Tibial artery (tissue), 4 donors: ENCODE measurements at regions of chr13 and their contacts with region 1.

Region 1: GRCh38 chr13:30408319-30409101 is 13.8 kb upstream of the UBE2L5 start:
- DNase-seq: peak; percentile 93 to 98
- H3K4me3 ChIP-seq: peak overlapping the region; percentile 45 to 53
- H3K27ac ChIP-seq: peak overlapping the region; percentile 79 to 95
- H3K4me1 ChIP-seq: peaks cover 0 to 33% (median 16%) of the 10 kb centered on the region in 4 donors
- H3K27me3 ChIP-seq: no peaks in the 10 kb centered on the region
- CTCF ChIP-seq: peak; percentile 73 to 91

Region 2: GRCh38 chr13:30422054-30422839 is 13.7 kb after region 1 on chr13 and contains the start of gene UBE2L5:
- intact Hi-C with region 1: loop called (anchors 2 kb)
- DNase-seq: peak; percentile 74 to 91
- H3K4me3 ChIP-seq: peak within 1 kb of the TSS; percentile 66 to 79
- H3K27ac ChIP-seq: peak within 1 kb of the TSS; percentile 94 to 95
- H3K4me1 ChIP-seq: peaks cover 0 to 25% (median 20%) of the 10 kb centered on the region in 4 donors
- H3K27me3 ChIP-seq: no peaks in the 10 kb centered on the region
- CTCF ChIP-seq: no peak

Region 3: GRCh38 chr13:30617315-30618185 is 209.0 kb after region 1 on chr13 and contains the start of gene USPL1:
- intact Hi-C with region 1: loop called (anchors 5 kb)
- DNase-seq: peak; percentile 96 to 99
- H3K4me3 ChIP-seq: peak within 1 kb of the TSS; percentile 77 to 92
- H3K27ac ChIP-seq: peak within 1 kb of the TSS; percentile 99
- H3K4me1 ChIP-seq: peaks cover 5 to 49% (median 25%) of the 10 kb centered on the region in 4 donors
- H3K27me3 ChIP-seq: no peaks in the 10 kb centered on the region
- CTCF ChIP-seq: peak; percentile 38 to 63